Caco-2 (cell line): ENCODE measurements at regions of chr13 and their contacts with region 1.

Region 1: GRCh38 chr13:45340926-45341750 is at the start of gene TPT1:
- DNase-seq: peak; percentile 99 to 100
- H3K4me3 ChIP-seq: peak within 1 kb of the TSS; percentile 79
- H3K4me3 Mint-ChIP-seq: peak within 1 kb of the TSS; percentile 94
- H3K27ac Mint-ChIP-seq: peak within 1 kb of the TSS; percentile 98
- H3K4me1 ChIP-seq: peaks cover 40% of the 10 kb centered on the region
- H3K4me1 Mint-ChIP-seq: peaks cover 23% of the 10 kb centered on the region
- H3K27me3 ChIP-seq: no peaks in the 10 kb centered on the region
- H3K27me3 Mint-ChIP-seq: no peaks in the 10 kb centered on the region
- CTCF ChIP-seq: no peak
- total RNA-seq, gene TPT1: 3,524 and 3,611 TPM in 2 replicates

Region 2: GRCh38 chr13:45255247-45255987 is 85.7 kb before region 1 on chr13:
- CTCF ChIA-PET with region 1: no interaction called
- POLR2A ChIA-PET with region 1: no interaction called
- intact Hi-C with region 1: no loop called
- DNase-seq: peak in 1 of 2 experiments; percentile 39
- H3K4me3 ChIP-seq: no peak overlapping the region
- H3K4me3 Mint-ChIP-seq: peak overlapping the region; percentile 3
- H3K27ac Mint-ChIP-seq: no peak overlapping the region
- H3K4me1 ChIP-seq: peaks cover 51% of the 10 kb centered on the region
- H3K4me1 Mint-ChIP-seq: peaks cover 34% of the 10 kb centered on the region
- H3K27me3 ChIP-seq: no peaks in the 10 kb centered on the region
- H3K27me3 Mint-ChIP-seq: no peaks in the 10 kb centered on the region
- CTCF ChIP-seq: no peak

Region 3: GRCh38 chr13:45310341-45311125 is 30.6 kb before region 1 on chr13:
- CTCF ChIA-PET with region 1: no interaction called
- POLR2A ChIA-PET with region 1: interaction called, 12 read pairs
- intact Hi-C with region 1: no loop called
- DNase-seq: no peak
- H3K4me3 ChIP-seq: peak overlapping the region; percentile 53
- H3K4me3 Mint-ChIP-seq: peak overlapping the region; percentile 65
- H3K27ac Mint-ChIP-seq: no peak overlapping the region
- H3K4me1 ChIP-seq: peaks cover 13% of the 10 kb centered on the region
- H3K4me1 Mint-ChIP-seq: peaks cover 10% of the 10 kb centered on the region
- H3K27me3 ChIP-seq: no peaks in the 10 kb centered on the region
- H3K27me3 Mint-ChIP-seq: no peaks in the 10 kb centered on the region
- CTCF ChIP-seq: no peak

Region 4: DNA sequence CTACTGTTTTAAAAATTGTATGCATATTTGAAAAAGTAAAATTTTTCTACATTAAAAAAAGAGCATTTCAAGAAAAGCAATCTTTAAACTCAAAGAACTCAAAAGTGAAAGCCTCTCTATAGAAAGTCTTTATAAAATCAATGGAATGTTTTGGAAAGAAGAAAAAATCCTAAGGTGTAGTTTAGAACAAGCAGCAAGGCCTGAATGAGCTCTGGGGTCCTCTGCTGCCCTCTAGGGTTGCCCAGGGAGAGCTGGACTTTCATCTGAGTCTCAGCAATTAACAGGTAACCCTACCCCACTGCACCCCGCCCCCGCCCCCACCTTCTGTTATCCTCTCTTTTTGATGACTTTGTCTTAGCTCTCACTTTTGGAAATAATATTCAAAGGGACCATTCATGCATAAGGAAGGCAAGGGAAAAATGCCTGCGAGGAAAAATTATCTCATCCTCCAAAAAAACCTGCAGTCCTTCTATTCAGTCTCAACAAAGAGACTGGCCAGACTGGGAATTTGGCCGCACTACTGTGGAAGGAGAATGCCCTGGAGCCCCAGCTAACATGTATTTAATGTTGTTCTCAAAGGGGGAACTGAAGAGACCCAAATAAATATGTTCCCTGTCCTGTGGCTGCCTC is 52.9 kb after region 1 on chr13:
- CTCF ChIA-PET with region 1: interaction called, 14 read pairs
- POLR2A ChIA-PET with region 1: interaction called, 12 read pairs
- intact Hi-C with region 1: loop called (anchors 1 kb)
- DNase-seq: peak; percentile 70 to 71
- H3K4me3 ChIP-seq: no peak overlapping the region
- H3K4me3 Mint-ChIP-seq: no peak overlapping the region
- H3K27ac Mint-ChIP-seq: no peak overlapping the region
- H3K4me1 ChIP-seq: no peaks in the 10 kb centered on the region
- H3K4me1 Mint-ChIP-seq: peaks cover 4% of the 10 kb centered on the region
- H3K27me3 ChIP-seq: no peaks in the 10 kb centered on the region
- H3K27me3 Mint-ChIP-seq: no peaks in the 10 kb centered on the region
- CTCF ChIP-seq: peak; percentile 81 to 94

Region 5: GRCh38 chr13:45417790-45418534 is 76.8 kb after region 1 on chr13 and contains the start of gene SLC25A30:
- CTCF ChIA-PET with region 1: no interaction called
- POLR2A ChIA-PET with region 1: interaction called, 5 read pairs
- intact Hi-C with region 1: loop called (anchors 2 kb)
- DNase-seq: peak; percentile 96 to 97
- H3K4me3 ChIP-seq: peak within 1 kb of the TSS; percentile 86
- H3K4me3 Mint-ChIP-seq: peak within 1 kb of the TSS; percentile 88
- H3K27ac Mint-ChIP-seq: peak within 1 kb of the TSS; percentile 29
- H3K4me1 ChIP-seq: peaks cover 17% of the 10 kb centered on the region
- H3K4me1 Mint-ChIP-seq: peaks cover 8% of the 10 kb centered on the region
- H3K27me3 ChIP-seq: no peaks in the 10 kb centered on the region
- H3K27me3 Mint-ChIP-seq: no peaks in the 10 kb centered on the region
- CTCF ChIP-seq: no peak
- total RNA-seq, gene SLC25A30: 12.2 and 16.5 TPM in 2 replicates

Region 6: GRCh38 chr13:45464687-45465453 is 123.7 kb after region 1 on chr13 and contains the start of gene COG3:
- CTCF ChIA-PET with region 1: interaction called, 4 read pairs
- POLR2A ChIA-PET with region 1: interaction called, 4 read pairs
- intact Hi-C with region 1: loop called (anchors 1 kb)
- DNase-seq: peak; percentile 96 to 97
- H3K4me3 ChIP-seq: peak within 1 kb of the TSS; percentile 93
- H3K4me3 Mint-ChIP-seq: peak within 1 kb of the TSS; percentile 94
- H3K27ac Mint-ChIP-seq: peak within 1 kb of the TSS; percentile 88
- H3K4me1 ChIP-seq: peaks cover 42% of the 10 kb centered on the region
- H3K4me1 Mint-ChIP-seq: peaks cover 29% of the 10 kb centered on the region
- H3K27me3 ChIP-seq: no peaks in the 10 kb centered on the region
- H3K27me3 Mint-ChIP-seq: no peaks in the 10 kb centered on the region
- CTCF ChIP-seq: peak in 1 of 2 experiments; percentile 68
- total RNA-seq, gene COG3: 31.1 and 35.8 TPM in 2 replicates

Region 7: DNA sequence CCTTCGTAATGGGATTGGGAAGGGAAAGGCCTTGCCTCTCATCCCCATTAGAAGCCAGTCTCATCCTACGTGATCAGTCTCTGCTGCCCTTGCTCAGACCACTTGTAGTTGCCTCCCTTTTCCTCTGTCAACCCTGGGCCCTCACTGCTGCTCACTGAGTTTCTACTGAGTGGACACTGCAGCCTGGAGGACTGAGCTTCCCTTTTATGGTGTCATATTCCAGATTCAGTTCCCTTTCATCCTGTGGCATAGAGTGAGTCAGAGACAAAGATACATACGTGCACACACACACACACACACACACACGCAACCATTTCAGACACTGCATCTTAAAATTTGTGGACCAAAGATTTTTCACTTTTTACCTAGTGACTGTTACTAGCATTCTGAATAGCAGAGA is 180.2 kb after region 1 on chr13:
- CTCF ChIA-PET with region 1: interaction called, 4 read pairs
- POLR2A ChIA-PET with region 1: interaction called, 3 read pairs
- intact Hi-C with region 1: loop called (anchors 1 kb)
- DNase-seq: peak; percentile 64
- H3K4me3 ChIP-seq: no peak overlapping the region
- H3K4me3 Mint-ChIP-seq: peak overlapping the region; percentile 73
- H3K27ac Mint-ChIP-seq: peak overlapping the region; percentile 92
- H3K4me1 ChIP-seq: peaks cover 84% of the 10 kb centered on the region
- H3K4me1 Mint-ChIP-seq: peaks cover 61% of the 10 kb centered on the region
- H3K27me3 ChIP-seq: no peaks in the 10 kb centered on the region
- H3K27me3 Mint-ChIP-seq: no peaks in the 10 kb centered on the region
- CTCF ChIP-seq: no peak